OCI-LY7 (cell line): ENCODE measurements at regions of chr6 and their contacts with region 1.

Region 1: GRCh38 chr6:101539536-101540240 is 146.2 kb downstream of the GRIK2 start:
- DNase-seq: no peak
- H3K4me3 ChIP-seq: no peak overlapping the region
- H3K27ac ChIP-seq: no peak overlapping the region
- H3K4me1 ChIP-seq: no peaks in the 10 kb centered on the region
- CTCF ChIP-seq: no peak

Region 2: DNA sequence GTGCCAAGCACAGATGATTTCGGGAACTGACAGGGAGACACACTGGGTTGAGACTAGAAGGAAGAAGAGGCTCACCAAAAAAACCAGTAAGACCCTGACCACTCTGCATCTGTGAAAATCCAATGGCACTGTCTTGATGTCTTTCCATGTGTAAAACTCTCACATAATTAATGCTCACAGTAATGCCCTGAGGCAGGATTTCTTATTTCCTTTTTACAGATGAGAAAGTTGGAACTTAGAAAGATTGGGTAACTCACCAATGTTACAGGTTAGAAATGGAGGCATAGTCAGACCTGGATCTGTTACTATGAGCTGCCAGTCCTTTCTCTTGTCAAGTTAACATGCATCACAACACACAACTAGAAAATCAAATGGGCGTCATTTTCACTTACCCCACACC is 1394.7 kb before region 1 on chr6:
- CTCF ChIA-PET with region 1: no interaction called
- POLR2A ChIA-PET with region 1: no interaction called
- intact Hi-C with region 1: loop called (anchors 5 kb)
- DNase-seq: no peak
- H3K4me3 ChIP-seq: no peak overlapping the region
- H3K27ac ChIP-seq: no peak overlapping the region
- H3K4me1 ChIP-seq: no peaks in the 10 kb centered on the region
- CTCF ChIP-seq: no peak